ENCODE measurements at regions of chr9 and their contacts with region 1.

Region 1: DNA sequence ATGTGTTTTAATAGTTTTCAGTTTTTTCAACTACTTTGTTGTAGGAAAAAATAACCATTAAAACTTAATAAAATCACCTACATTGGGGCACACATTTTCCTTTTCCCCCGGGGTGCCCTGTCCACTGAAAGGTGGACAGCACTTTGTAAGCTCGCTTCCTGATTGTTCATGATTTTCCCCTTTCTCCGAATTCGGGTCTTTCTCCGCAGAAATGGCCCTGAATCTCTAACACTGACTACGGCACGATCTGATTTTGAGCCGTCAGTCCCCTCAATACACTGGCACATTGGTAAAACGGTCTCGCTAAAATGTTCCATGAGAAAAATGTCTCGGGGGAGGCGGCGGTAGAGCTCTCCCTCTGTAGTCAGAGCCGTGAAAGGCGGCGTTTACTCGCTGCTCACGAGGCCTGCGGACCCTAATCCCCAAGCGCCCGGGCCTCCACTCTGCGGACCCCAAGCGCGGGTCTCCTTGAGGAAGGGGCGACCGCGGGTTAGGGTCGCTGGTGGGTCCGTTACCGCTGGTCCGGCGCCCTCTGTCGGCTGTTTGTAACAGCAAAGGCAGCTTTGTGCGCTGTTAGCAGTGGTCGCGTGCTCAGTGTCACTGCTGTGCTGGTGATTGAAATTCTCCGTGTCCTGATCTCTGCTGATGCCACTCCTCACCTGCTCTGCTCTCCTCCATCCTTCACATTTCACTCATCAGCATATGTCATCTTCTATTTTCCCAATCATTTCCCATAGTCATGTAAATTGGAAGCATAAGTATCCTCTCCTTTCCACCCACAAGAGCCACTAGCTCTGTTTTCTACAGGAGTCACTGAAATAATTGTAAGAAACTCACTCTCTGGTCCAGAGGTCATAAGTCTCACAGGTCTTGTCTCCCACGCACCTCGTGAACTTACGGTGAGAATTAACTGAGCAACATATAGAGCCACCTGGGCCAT is 10.8 kb upstream of the IFNA2 start:
- DNase-seq: peak; percentile 84
- ATAC-seq: peak; percentile 84
- H3K4me3 Mint-ChIP-seq: peak overlapping the region; percentile 74
- H3K27ac Mint-ChIP-seq: no peak overlapping the region
- H3K4me1 Mint-ChIP-seq: peaks cover 2% of the 10 kb centered on the region; the same call in 1 of the 2 replicates
- H3K27me3 Mint-ChIP-seq: peaks cover 50% of the 10 kb centered on the region
- CTCF ChIP-seq: peak; percentile 77

Region 2: DNA sequence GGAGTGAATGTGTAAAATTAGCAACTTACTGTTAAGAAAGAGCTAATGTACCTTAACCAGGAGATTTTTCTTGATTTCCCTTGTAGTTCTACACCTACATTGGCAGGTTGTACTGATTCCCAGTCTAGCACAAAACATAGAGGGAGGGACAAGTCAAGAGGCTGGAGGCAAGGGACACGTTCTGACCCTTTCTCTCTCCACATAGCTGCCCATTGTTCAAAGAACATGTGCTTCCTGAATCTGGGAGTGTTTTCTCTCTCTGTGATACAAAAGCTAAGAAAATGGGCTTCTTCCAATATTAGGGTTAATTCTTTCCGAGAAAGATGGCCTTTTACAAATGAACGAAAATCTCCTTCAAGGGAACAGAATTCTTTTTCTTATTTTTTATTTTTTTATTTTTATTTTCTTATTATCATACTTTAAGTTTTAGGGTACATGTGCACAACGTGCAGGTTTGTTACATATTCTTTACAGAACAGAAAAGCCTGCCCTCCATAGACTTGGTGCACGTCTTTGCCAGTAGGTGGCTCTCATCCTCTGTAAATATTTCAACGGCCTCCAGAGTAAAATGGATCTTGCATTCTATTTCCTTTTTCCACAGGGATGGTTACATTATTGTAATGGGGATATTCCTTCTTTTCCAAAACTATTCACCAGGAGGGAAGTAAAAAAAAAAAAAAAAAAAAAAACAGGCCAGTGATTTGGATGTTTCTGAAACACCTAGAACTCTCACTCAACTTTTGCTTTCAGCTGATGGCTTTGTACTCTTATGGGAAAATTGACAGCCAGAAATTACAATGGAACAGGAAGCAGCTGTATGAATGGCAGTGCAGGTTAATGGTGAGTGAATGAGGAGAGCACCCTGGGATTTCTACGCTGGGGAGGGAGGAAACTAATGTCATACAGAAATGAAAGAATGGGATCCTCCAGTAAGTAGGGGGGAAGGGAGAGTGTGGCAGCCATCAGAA is 77.8 kb before region 1 on chr9:
- CTCF ChIA-PET with region 1: interaction called, 14 read pairs
- POLR2A ChIA-PET with region 1: no interaction called
- DNase-seq: peak; percentile 22
- ATAC-seq: peak; percentile 76
- H3K4me3 Mint-ChIP-seq: no peak overlapping the region
- H3K27ac Mint-ChIP-seq: no peak overlapping the region
- H3K4me1 Mint-ChIP-seq: peaks cover 4% of the 10 kb centered on the region
- H3K27me3 Mint-ChIP-seq: peaks cover 12% of the 10 kb centered on the region
- CTCF ChIP-seq: peak; percentile 48

Region 3: GRCh38 chr9:21334701-21335632 is 61.1 kb before region 1 on chr9 and contains the start of gene KLHL9:
- CTCF ChIA-PET with region 1: interaction called, 17 read pairs
- POLR2A ChIA-PET with region 1: no interaction called
- DNase-seq: peak; percentile 91
- ATAC-seq: peak; percentile 94
- H3K4me3 Mint-ChIP-seq: peak within 1 kb of the TSS; percentile 93
- H3K27ac Mint-ChIP-seq: peak within 1 kb of the TSS; percentile 88
- H3K4me1 Mint-ChIP-seq: peaks cover 37% of the 10 kb centered on the region
- H3K27me3 Mint-ChIP-seq: peaks cover 18% of the 10 kb centered on the region
- CTCF ChIP-seq: no peak
- total RNA-seq, gene KLHL9: 15.6 to 17.4 TPM (median 16.1 TPM) in 3 replicates

Region 4: DNA sequence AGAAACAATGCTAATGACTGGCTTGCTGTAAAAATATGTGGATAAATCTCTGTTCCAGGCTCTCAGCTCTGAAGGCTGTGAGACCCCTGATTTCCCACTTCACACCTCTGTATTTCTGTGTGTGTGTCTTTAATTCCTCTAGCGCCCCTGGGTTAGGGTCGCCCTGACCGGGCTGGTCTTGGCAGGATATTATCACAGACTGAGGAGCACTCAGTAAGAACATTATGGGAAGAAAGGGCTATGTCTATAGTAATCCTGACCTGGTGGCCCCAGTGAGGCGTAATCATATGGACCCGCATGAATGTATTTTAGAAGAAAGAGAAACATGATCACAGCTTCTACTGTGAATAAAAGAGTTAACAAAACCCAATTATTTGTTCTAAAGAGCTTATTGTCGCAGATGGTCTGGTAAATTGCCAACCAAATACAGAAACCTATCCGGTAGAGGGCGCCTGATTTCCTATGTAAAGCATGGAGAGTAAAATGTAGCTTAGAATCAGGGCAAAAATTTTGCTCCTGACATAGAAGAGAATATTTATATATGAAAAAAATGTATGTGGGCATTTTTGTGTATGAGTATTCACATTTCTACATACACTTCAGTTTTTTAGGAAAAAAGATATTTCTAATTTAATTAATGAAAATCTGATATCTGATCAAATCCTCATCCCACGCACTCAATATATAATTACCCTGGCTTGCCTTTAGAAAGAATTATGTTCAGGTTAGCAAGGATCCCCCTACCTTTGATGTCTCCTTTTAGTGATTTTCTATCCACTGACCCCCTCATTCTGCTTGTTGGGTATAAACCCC is 38.4 kb after region 1 on chr9:
- CTCF ChIA-PET with region 1: interaction called, 10 read pairs
- POLR2A ChIA-PET with region 1: no interaction called
- DNase-seq: peak; percentile 32
- ATAC-seq: peak; percentile 64
- H3K4me3 Mint-ChIP-seq: no peak overlapping the region
- H3K27ac Mint-ChIP-seq: no peak overlapping the region
- H3K4me1 Mint-ChIP-seq: peaks cover 18% of the 10 kb centered on the region
- H3K27me3 Mint-ChIP-seq: no peaks in the 10 kb centered on the region
- CTCF ChIP-seq: peak; percentile 34; the same call in 1 of the 2 replicates

Measured in WTC11 (cell line).